ENCODE measurements at regions of chr5 and their contacts with region 1.

Region 1: GRCh38 chr5:155189981-155190380 is 176.4 kb downstream of the KIF4B start:
- DNase-seq: no peak
- ATAC-seq: no peak
- H3K4me3 ChIP-seq: no peak overlapping the region
- H3K27ac ChIP-seq: no peak overlapping the region
- H3K4me1 ChIP-seq: peaks cover 0 to 13% (median 5%) of the 10 kb centered on the region in 9 donors
- H3K27me3 ChIP-seq: no peaks in the 10 kb centered on the region
- CTCF ChIP-seq: no peak

Region 2: DNA sequence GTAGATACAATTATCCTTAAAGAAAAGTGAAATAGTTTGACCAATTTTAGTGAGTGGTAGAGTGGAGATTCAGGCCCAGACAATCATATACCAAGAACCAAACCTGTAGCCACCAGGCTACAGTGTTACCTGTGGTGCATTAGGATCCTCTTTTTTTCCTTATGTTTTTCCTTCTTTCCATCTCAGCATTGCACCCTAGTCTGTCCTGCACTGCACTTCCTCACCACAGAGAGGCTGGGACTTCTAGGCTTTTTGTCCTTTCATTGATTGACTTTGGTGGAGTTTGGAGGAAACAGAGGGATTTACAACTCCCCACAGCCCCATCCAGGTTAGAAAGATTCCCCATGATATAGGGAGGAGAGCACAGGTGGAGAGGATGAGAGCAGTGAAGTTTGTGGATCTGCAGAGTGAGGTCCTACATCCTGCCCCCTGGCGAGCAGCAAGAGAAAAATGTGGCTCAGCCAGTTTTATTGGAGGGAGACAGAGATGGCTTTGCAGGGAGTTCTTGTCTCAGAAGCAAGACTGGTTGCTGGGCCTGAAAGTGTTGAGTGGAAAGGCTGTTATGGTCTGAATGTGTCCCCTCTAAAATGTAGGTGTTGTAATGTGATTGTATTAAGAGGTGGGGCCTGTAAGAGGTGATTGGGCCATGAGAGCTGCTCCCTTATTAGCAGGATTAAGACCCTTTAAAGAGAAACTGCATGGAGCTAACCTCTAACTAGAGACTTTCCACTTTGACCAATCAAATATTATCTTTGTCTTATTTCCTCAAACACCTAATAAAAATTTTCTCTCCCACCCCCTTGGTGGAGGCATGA is 140.2 kb before region 1 on chr5:
- intact Hi-C with region 1: loop called in 1 of 10 experiments (anchors 5 kb)
- DNase-seq: no peak
- ATAC-seq: no peak
- H3K4me3 ChIP-seq: no peak overlapping the region
- H3K27ac ChIP-seq: no peak overlapping the region
- H3K4me1 ChIP-seq: peaks cover 0 to 17% (median 5%) of the 10 kb centered on the region in 9 donors
- H3K27me3 ChIP-seq: no peaks in the 10 kb centered on the region
- CTCF ChIP-seq: peak in 2 of 9 donors; percentile 8 to 12

Region 3: GRCh38 chr5:155091063-155091648 is 98.8 kb before region 1 on chr5:
- intact Hi-C with region 1: loop called in 2 of 10 experiments (anchors 2 to 5 kb)
- DNase-seq: peak in 1 of 2 donors; percentile 58
- ATAC-seq: peak; percentile 41 to 90 (median 84)
- H3K4me3 ChIP-seq: no peak overlapping the region
- H3K27ac ChIP-seq: peak overlapping the region; percentile 8 to 83 (median 66)
- H3K4me1 ChIP-seq: peaks cover 0 to 34% (median 13%) of the 10 kb centered on the region in 9 donors
- H3K27me3 ChIP-seq: no peaks in the 10 kb centered on the region
- CTCF ChIP-seq: no peak

Region 4: GRCh38 chr5:155147222-155147621 is 42.8 kb before region 1 on chr5:
- intact Hi-C with region 1: loop called in 1 of 10 experiments (anchors 5 kb)
- DNase-seq: no peak
- ATAC-seq: no peak
- H3K4me3 ChIP-seq: no peak overlapping the region
- H3K27ac ChIP-seq: no peak overlapping the region
- H3K4me1 ChIP-seq: peaks cover 0 to 8% (median 0%) of the 10 kb centered on the region in 9 donors
- H3K27me3 ChIP-seq: no peaks in the 10 kb centered on the region
- CTCF ChIP-seq: peak in 6 of 9 donors; percentile 15 to 43 (median 32)

Region 5: DNA sequence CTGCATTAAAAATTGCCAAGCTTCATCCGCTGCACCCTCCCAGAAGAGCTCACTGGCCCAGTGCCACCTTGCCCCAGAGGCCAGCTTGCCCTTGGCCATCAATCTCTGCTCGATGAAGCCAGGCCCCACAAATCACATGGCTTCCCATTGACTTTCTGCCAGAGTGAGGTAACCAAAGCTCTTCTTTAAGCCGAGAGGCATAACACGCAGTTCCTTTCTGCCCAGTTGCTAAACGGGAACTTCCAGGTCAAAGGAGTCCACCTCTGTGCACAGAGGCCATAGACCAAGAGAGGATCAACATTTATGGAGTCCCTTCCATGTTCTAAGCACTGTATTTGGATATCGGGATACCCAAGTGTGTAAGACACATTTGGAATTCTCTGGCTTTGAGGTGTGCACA is 32.4 kb after region 1 on chr5:
- intact Hi-C with region 1: no loop called
- DNase-seq: no peak
- ATAC-seq: no peak
- H3K4me3 ChIP-seq: no peak overlapping the region
- H3K27ac ChIP-seq: no peak overlapping the region
- H3K4me1 ChIP-seq: peaks cover 0 to 5% (median 0%) of the 10 kb centered on the region in 9 donors
- H3K27me3 ChIP-seq: no peaks in the 10 kb centered on the region
- CTCF ChIP-seq: no peak

Region 6: DNA sequence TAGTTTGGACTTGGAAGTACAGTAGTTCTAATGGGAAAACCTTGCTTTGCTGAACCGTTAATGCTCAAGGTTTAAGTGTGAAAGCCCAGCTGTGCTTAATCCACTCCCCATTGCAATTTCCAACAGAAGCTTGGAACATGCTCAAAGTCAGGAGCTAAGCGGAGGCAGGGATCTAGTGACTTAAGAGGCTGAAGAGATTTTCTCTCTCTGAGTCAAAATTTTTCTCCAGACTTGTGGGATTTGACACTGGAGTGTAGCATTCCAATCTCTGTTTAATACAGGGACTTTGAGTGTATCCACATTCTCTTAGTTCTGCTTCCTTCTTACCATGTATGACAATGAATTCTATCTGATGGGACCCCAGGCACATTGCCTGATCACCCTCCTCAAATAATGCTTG is 295.4 kb after region 1 on chr5:
- intact Hi-C with region 1: loop called in 5 of 10 experiments (anchors 1 to 10 kb)
- DNase-seq: no peak
- ATAC-seq: no peak
- H3K4me3 ChIP-seq: no peak overlapping the region
- H3K27ac ChIP-seq: peak overlapping the region in 2 of 10 donors; percentile 7 to 20
- H3K4me1 ChIP-seq: peaks cover 0 to 15% (median 0%) of the 10 kb centered on the region in 9 donors
- H3K27me3 ChIP-seq: no peaks in the 10 kb centered on the region
- CTCF ChIP-seq: no peak

Region 7: GRCh38 chr5:155728146-155728856 is 538.3 kb after region 1 on chr5:
- intact Hi-C with region 1: loop called in 2 of 10 experiments (anchors 2 to 5 kb)
- DNase-seq: peak; percentile 47 to 68
- ATAC-seq: peak; percentile 17 to 86 (median 76)
- H3K4me3 ChIP-seq: peak overlapping the region; percentile 39 to 64 (median 56)
- H3K27ac ChIP-seq: peak overlapping the region; percentile 50 to 91 (median 83)
- H3K4me1 ChIP-seq: peaks cover 0 to 40% (median 5%) of the 10 kb centered on the region in 9 donors
- H3K27me3 ChIP-seq: peaks cover 0 to 71% (median 33%) of the 10 kb centered on the region in 7 donors
- CTCF ChIP-seq: peak in 4 of 9 donors; percentile 24 to 43 (median 37)

Measured in heart right ventricle (tissue), 16 donors.